Thyroid gland (tissue), 4 donors: ENCODE measurements at regions of chr5 and their contacts with region 1.

Region 1: GRCh38 chr5:133868946-133869518 is 99.4 kb downstream of the C5orf15 start:
- DNase-seq: peak; percentile 76 to 79
- H3K4me3 ChIP-seq: no peak overlapping the region
- H3K27ac ChIP-seq: peak overlapping the region in 1 of 3 donors; percentile 4
- H3K4me1 ChIP-seq: no peaks in the 10 kb centered on the region
- H3K27me3 ChIP-seq: no peaks in the 10 kb centered on the region
- CTCF ChIP-seq: peak; percentile 53 to 84 (median 74)
- POLR2A ChIP-seq: no peak

Region 2: GRCh38 chr5:133111299-133111698 is 757.7 kb before region 1 on chr5:
- intact Hi-C with region 1: loop called (anchors 10 kb)
- DNase-seq: peak; percentile 76 to 86
- H3K4me3 ChIP-seq: no peak overlapping the region
- H3K27ac ChIP-seq: no peak overlapping the region
- H3K4me1 ChIP-seq: peaks cover 0 to 4% of the 10 kb centered on the region in 2 donors
- H3K27me3 ChIP-seq: no peaks in the 10 kb centered on the region
- CTCF ChIP-seq: peak; percentile 41 to 88 (median 78)
- POLR2A ChIP-seq: no peak

Region 3: GRCh38 chr5:133425222-133425621 is 443.8 kb before region 1 on chr5:
- intact Hi-C with region 1: loop called (anchors 5 kb)
- DNase-seq: no peak
- H3K4me3 ChIP-seq: no peak overlapping the region
- H3K27ac ChIP-seq: no peak overlapping the region
- H3K4me1 ChIP-seq: no peaks in the 10 kb centered on the region
- H3K27me3 ChIP-seq: no peaks in the 10 kb centered on the region
- CTCF ChIP-seq: no peak
- POLR2A ChIP-seq: no peak

Region 4: GRCh38 chr5:133763744-133764143 is 105.3 kb before region 1 on chr5:
- intact Hi-C with region 1: loop called (anchors 10 kb)
- DNase-seq: peak; percentile 68 to 86
- H3K4me3 ChIP-seq: no peak overlapping the region
- H3K27ac ChIP-seq: no peak overlapping the region
- H3K4me1 ChIP-seq: peaks cover 0 to 10% of the 10 kb centered on the region in 2 donors
- H3K27me3 ChIP-seq: no peaks in the 10 kb centered on the region
- CTCF ChIP-seq: no peak
- POLR2A ChIP-seq: no peak

Region 5: DNA sequence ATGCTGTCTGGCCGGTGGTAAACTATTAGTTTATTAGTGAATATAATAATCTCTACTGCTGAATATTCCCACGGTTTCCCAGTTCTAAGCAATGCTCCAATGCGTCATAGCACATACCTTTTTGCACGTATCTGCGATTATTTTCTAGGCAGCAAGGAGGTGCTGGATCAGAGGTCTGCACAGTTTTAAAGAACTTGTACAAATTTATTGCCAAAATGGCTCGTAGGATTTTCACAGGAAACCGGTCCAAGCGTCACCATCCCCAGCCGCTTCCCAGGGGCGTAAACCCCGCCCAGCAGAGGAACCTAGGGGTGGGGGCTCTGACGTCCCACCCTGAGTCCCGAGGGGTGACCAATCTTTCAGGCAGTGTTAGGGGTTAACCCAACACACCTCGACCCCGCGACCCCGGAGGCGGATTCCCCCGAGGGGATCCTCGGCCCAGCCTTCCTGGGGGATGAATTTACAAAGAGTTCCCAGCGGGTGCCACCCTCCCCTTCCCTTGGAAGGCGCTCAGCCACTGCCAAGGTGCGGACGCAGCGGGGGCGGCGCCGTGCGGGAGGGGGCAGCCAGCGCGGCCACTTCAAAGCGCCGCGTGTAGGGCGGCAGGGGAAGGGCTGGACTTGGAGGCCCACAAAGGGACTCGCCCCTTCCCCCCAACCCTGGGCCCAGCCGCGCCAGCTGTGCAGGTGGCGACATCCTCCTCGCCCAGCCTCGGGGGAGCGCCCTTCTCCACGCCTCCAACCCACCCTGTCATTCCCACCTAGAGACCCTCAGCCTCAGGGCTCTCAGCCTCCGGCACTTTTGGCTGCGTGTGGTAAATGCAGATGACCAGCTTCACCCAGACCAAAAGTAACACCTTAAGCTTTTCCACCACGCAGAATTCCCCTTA is 201.9 kb after region 1 on chr5:
- intact Hi-C with region 1: no loop called
- DNase-seq: peak; percentile 29 to 36
- H3K4me3 ChIP-seq: peak overlapping the region; percentile 6 to 32 (median 19)
- H3K27ac ChIP-seq: no peak overlapping the region
- H3K4me1 ChIP-seq: peaks cover 0 to 7% of the 10 kb centered on the region in 2 donors
- H3K27me3 ChIP-seq: no peaks in the 10 kb centered on the region
- CTCF ChIP-seq: no peak
- POLR2A ChIP-seq: no peak

Region 6: GRCh38 chr5:134392301-134392700 is 523.3 kb after region 1 on chr5:
- intact Hi-C with region 1: no loop called
- DNase-seq: no peak
- H3K4me3 ChIP-seq: no peak overlapping the region
- H3K27ac ChIP-seq: no peak overlapping the region
- H3K4me1 ChIP-seq: peaks cover 7 to 15% of the 10 kb centered on the region in 2 donors
- H3K27me3 ChIP-seq: no peaks in the 10 kb centered on the region
- CTCF ChIP-seq: no peak
- POLR2A ChIP-seq: no peak